AG04450 (cell line): ENCODE measurements at regions of chr9 and their contacts with region 1.

Region 1: DNA sequence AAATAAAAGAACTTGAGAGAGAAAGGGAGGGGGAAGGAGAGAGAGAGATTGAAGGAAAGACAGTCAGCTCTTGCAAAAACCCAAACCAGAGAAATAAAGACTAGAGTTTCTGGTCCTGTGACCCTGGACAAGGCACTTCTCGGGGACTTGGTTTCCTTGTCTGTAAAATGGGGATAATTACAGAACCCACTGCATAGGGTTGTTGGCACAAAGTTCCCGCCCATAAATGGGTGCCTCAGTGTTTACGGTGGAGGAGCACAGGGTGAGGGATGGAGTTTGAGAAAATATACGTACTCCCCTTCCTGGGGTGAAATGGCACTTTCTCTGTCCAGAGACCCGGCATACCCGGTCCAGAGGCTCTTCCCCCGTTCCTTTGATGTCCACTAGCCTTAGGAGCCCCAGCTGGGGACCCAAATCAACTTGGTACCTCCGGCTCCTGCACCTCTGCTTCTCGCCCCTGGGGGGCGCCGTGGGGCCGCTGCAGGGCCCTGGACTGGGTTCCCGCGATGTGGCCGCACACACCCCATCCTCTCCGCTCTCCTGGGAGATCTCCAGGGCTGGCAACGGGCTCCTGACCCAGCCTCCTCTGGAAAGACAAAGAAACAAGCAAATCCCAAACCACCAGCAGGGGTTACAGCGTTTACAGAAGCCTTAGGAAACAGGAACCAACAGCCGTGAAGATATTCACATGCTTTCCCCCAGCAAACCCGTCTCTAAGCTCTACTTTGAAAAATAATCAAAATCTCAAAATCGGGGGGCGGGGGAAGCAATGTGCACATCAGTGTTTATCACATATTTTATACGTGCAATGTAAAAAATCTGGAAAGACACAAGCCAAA is 26.3 kb downstream of the PTGES start:
- DNase-seq: peak; percentile 55
- H3K4me3 ChIP-seq: no peak overlapping the region
- H3K27ac ChIP-seq: no peak overlapping the region
- H3K27me3 ChIP-seq: no peaks in the 10 kb centered on the region
- CTCF ChIP-seq: peak; percentile 96

Region 2: DNA sequence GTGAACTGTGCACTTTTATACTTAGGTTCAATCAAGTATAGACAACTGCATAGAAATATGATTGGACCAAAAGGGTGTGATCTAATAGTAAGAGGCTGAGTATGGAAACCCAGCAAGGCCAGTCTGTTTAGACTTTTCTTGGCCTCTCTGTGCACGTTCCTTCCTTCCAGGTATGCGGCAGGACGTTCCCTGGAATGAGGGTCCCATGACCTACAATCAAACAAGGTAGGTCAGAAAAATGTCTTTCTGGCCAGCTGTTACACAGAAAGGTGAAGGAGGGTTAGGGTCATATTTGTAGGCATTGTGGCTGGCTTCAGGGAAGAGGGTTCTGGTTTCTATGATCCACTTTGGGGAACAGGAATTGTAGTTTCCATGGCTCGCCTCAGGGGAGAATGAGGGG is 190.5 kb before region 1 on chr9:
- CTCF ChIA-PET with region 1: no interaction called
- POLR2A ChIA-PET with region 1: no interaction called
- DNase-seq: no peak
- H3K4me3 ChIP-seq: no peak overlapping the region
- H3K27ac ChIP-seq: no peak overlapping the region
- H3K27me3 ChIP-seq: no peaks in the 10 kb centered on the region
- CTCF ChIP-seq: no peak

Region 3: DNA sequence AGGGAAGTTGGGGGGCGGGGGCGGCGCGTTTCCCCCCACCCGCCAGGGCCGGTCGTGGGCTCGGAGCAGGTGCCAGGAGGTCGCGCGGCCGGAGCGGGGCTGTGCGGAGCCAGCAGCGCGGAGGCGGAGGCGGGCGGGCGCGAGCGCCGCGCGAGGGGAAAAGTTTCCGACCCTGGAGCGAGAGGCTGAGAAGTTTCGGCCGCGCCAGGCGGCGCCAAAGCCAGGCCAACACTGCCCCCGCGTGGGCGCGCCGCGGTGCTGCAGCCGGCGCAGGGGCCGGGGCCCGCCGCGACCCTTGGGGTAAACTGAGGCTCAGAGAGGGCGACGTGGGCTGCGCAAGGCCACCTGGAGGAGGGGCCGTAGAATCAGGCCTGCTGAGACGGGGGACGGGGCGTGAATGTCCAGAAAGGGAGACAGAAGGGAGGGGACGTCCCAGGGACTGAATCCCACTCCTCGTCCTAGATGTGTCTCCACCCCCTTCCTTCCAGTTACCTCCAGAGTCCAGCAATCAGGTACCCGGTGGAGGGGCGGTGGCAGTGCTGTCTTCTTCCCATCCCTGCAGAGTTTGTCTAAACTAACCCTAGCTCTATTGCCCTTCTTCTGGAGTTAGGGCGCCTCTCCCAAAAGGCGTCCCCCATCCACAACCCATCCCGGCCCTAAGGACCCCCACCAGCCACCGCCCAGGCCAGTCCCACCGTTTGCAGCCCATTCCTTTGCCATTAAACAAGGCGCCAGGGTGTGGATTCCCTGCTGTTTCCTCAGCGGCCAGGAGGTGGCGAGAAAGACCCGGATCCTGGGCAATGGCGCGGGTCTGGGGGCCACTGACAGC is 115.9 kb before region 1 on chr9:
- CTCF ChIA-PET with region 1: no interaction called
- POLR2A ChIA-PET with region 1: no interaction called
- DNase-seq: no peak
- H3K4me3 ChIP-seq: peak overlapping the region; percentile 68
- H3K27ac ChIP-seq: peak overlapping the region; percentile 47
- H3K27me3 ChIP-seq: no peaks in the 10 kb centered on the region
- CTCF ChIP-seq: peak; percentile 80

Region 4: DNA sequence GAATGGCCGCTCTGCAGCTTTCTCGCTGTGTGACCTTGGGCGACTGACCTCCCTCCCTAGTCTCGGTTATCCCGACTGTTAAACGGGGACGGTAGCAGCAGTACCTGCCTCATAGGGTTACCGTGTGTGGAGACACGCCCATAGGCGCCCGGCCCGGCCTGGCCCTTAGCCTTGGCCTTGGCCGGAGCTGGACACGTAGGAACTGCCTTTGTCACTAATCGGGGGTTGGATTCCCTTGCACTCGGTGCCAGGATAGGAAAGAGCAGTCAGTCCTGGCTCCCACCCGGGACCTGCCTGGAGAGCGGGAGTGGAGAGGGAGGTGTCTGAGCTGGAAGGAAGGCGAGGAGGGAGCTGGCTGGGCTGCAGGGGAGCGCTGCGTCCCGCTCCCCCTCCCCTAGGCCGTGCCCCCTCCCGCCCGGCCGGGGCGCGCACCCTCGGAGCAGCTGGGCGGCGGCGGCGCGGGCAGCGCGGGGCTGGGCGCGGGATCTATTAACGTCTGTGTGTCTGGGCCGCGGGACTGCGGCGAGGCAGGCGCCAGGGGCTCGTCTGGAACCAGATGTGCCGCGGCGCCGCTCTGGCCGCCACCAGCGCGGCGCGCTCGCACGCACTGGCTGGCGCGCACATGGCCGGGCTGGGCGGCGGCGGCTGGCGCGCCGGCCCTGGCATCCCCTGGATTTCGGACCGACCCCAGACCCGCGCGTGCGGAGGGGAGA is 29.4 kb before region 1 on chr9:
- CTCF ChIA-PET with region 1: interaction called, 27 read pairs
- POLR2A ChIA-PET with region 1: interaction called, 5 read pairs
- DNase-seq: no peak
- H3K4me3 ChIP-seq: peak overlapping the region; percentile 58
- H3K27ac ChIP-seq: peak overlapping the region; percentile 85
- H3K27me3 ChIP-seq: no peaks in the 10 kb centered on the region
- CTCF ChIP-seq: no peak

Region 5: DNA sequence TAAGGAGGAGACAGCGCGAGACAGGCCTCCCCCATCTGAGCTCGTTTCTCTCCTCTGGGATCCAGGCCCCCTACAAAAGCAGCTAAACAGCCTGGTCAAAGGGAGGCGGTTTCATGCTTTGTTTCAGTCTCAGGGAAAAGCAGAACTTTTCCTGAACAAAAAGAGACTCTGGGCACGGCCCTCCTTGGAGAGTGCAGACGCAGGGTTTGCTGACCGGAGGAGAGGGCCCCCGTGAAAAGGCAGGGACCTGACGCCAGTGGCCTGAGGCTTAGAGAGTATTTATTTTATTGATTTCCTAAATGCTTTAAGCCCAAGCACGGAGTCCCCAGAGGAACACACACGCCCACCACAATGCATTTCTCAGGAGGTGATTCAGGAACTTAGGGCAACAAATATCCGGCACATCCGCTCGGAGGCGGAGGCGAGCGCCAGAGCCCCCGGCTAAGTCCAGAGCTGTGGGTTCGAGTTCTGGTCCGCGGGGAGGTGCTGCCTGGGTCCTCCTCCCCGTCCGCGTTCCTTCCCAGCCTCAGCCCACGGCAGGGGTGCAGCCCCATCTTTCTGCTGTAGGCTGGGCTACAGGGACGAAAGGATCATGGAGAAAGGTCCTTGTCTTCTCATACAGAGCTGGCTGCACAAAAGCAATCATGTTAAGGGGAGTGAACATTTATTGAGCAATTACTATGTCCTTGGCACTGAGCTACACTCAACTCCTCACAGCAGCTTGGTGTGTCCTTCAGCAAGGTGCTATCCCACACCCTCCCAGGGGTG is 13.7 kb before region 1 on chr9:
- CTCF ChIA-PET with region 1: interaction called, 34 read pairs
- POLR2A ChIA-PET with region 1: interaction called, 8 read pairs
- DNase-seq: peak; percentile 41
- H3K4me3 ChIP-seq: peak overlapping the region; percentile 36
- H3K27ac ChIP-seq: peak overlapping the region; percentile 95
- H3K27me3 ChIP-seq: no peaks in the 10 kb centered on the region
- CTCF ChIP-seq: 0 out of 2 replicates have a peak, but pooled peaks have one; percentile 10

Region 6: GRCh38 chr9:129752915-129753729 is 26.6 kb after region 1 on chr9 and contains the start of gene PTGES:
- CTCF ChIA-PET with region 1: interaction called, 10 read pairs
- POLR2A ChIA-PET with region 1: no interaction called
- DNase-seq: peak; percentile 68
- H3K4me3 ChIP-seq: peak within 1 kb of the TSS; percentile 68
- H3K27ac ChIP-seq: peak within 1 kb of the TSS; percentile 21
- H3K27me3 ChIP-seq: peaks cover 2% of the 10 kb centered on the region
- CTCF ChIP-seq: no peak
- polyA plus RNA-seq, gene PTGES: 17.0 and 21.4 TPM in 2 replicates

Region 7: GRCh38 chr9:129776938-129777768 is 50.6 kb after region 1 on chr9:
- CTCF ChIA-PET with region 1: interaction called, 60 read pairs
- POLR2A ChIA-PET with region 1: no interaction called
- DNase-seq: peak; percentile 98
- H3K4me3 ChIP-seq: peak overlapping the region; percentile 42
- H3K27ac ChIP-seq: peak overlapping the region; percentile 85
- H3K27me3 ChIP-seq: no peaks in the 10 kb centered on the region
- CTCF ChIP-seq: no peak